Panc1 (cell line): ENCODE measurements at regions of chr11 and their contacts with region 1.

Region 1: GRCh38 chr11:82867495-82868082 is 32.6 kb downstream of the PRCP start:
- DNase-seq: peak; percentile 52
- ATAC-seq: peak; percentile 69
- H3K4me3 ChIP-seq: peak overlapping the region in 1 of 2 experiments; percentile 26; a peak in 2 of 4 replicates
- H3K27ac ChIP-seq: peak overlapping the region; percentile 60; the same call in 1 of the 2 replicates
- H3K4me1 ChIP-seq: peaks cover 21% of the 10 kb centered on the region
- H3K27me3 ChIP-seq: no peaks in the 10 kb centered on the region
- CTCF ChIP-seq: peak; percentile 90

Region 2: GRCh38 chr11:82718307-82718706 is 149.3 kb before region 1 on chr11:
- CTCF ChIA-PET with region 1: interaction called, 3 read pairs
- POLR2A ChIA-PET with region 1: no interaction called
- in situ Hi-C with region 1: no loop called
- intact Hi-C with region 1: loop called (anchors 1 kb)
- DNase-seq: peak; percentile 25
- ATAC-seq: peak; percentile 83
- H3K4me3 ChIP-seq: no peak overlapping the region
- H3K27ac ChIP-seq: no peak overlapping the region
- H3K4me1 ChIP-seq: no peaks in the 10 kb centered on the region; the same call in 1 of the 2 replicates
- H3K27me3 ChIP-seq: peaks cover 7% of the 10 kb centered on the region
- CTCF ChIP-seq: peak; percentile 91

Region 3: DNA sequence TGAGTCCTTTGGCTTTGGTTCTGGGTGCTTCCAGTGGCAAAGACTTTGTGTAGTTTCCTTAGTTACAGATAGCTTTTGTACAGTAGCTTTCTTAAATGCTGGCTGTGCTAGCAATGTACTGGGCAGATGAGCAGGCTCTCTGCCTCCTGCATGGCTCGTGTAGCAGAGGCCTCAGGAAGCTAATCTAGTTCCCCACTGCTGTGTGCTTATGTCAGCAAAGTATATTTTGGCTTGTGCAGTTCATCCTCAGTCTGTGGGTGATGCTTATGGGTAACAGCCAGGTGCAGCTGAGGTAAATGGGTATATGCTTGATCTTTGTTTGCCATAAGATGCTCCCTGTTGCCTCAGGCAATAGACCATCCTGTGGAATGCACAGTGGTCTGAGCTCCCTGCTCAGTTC is 64.9 kb before region 1 on chr11:
- CTCF ChIA-PET with region 1: no interaction called
- POLR2A ChIA-PET with region 1: no interaction called
- in situ Hi-C with region 1: no loop called
- intact Hi-C with region 1: no loop called
- DNase-seq: no peak
- ATAC-seq: no peak
- H3K4me3 ChIP-seq: no peak overlapping the region
- H3K27ac ChIP-seq: no peak overlapping the region
- H3K4me1 ChIP-seq: no peaks in the 10 kb centered on the region
- H3K27me3 ChIP-seq: peaks cover 6% of the 10 kb centered on the region
- CTCF ChIP-seq: no peak

Region 4: GRCh38 chr11:82818409-82819043 is 49.1 kb before region 1 on chr11:
- CTCF ChIA-PET with region 1: no interaction called
- POLR2A ChIA-PET with region 1: no interaction called
- in situ Hi-C with region 1: no loop called
- intact Hi-C with region 1: no loop called
- DNase-seq: no peak
- ATAC-seq: no peak
- H3K4me3 ChIP-seq: no peak overlapping the region
- H3K27ac ChIP-seq: no peak overlapping the region
- H3K4me1 ChIP-seq: no peaks in the 10 kb centered on the region
- H3K27me3 ChIP-seq: peaks cover 9% of the 10 kb centered on the region; the same call in 1 of the 2 replicates
- CTCF ChIP-seq: peak; percentile 33

Region 5: DNA sequence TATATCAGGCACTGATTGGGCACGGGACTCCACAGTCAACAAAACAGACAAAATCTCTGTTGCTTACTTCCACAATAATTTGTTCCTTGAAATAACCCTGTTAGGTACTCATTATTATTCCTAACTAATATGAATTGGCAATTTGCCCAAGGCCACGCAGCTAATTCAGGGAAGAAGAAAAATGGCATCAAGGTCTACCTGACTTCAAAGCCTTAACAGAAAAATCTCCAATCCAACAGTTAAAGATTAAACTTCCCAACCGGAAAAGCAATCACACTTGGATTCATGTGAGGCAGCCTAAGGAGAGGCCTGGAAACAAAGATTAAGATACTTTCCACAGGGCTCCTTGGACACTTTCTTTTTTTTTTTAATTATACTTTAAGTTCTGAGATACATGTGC is 36.2 kb before region 1 on chr11:
- CTCF ChIA-PET with region 1: no interaction called
- POLR2A ChIA-PET with region 1: interaction called, 11 read pairs
- in situ Hi-C with region 1: no loop called
- intact Hi-C with region 1: no loop called
- DNase-seq: no peak
- ATAC-seq: no peak
- H3K4me3 ChIP-seq: no peak overlapping the region
- H3K27ac ChIP-seq: no peak overlapping the region
- H3K4me1 ChIP-seq: no peaks in the 10 kb centered on the region; the same call in 1 of the 2 replicates
- H3K27me3 ChIP-seq: no peaks in the 10 kb centered on the region
- CTCF ChIP-seq: no peak

Region 6: GRCh38 chr11:82900277-82901164 is 32.9 kb after region 1 on chr11 and contains the start of gene PRCP:
- CTCF ChIA-PET with region 1: interaction called, 10 read pairs
- POLR2A ChIA-PET with region 1: no interaction called
- in situ Hi-C with region 1: no loop called
- intact Hi-C with region 1: no loop called
- DNase-seq: peak; percentile 79
- ATAC-seq: peak; percentile 94
- H3K4me3 ChIP-seq: peak within 1 kb of the TSS; percentile 75 to 91
- H3K27ac ChIP-seq: peak within 1 kb of the TSS; percentile 93
- H3K4me1 ChIP-seq: peaks cover 20% of the 10 kb centered on the region
- H3K27me3 ChIP-seq: no peaks in the 10 kb centered on the region
- CTCF ChIP-seq: no peak
- total RNA-seq, gene PRCP: 57.0 TPM

Region 7: DNA sequence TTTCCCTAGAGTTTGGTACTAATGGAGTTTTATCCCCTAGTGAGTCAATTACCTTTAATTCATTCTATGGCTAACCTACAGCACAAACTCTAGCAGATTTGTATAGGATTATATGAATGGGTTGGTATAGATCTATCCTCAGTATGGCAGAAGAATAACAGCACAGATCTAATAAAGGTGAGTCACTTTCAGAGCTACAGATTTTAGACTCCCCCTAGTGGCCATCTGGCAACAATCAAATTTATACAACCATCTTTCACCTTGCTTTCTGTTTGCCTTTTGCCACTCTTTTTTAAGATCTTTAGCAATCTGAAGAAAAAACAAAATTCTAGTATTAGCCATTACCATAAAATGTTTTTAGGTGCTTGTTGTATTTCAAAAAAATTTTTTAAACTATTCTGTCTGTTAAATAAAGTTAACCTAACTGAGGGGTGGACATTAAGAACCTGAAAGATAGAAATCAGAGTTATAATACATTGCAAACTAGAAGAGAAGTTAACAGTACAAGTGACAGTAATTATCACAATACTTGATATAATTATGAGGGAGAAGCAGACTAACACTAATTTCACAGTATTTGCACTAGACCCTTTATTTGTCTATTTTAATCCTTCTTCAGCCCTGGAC is 59.8 kb after region 1 on chr11:
- CTCF ChIA-PET with region 1: interaction called, 5 read pairs
- POLR2A ChIA-PET with region 1: no interaction called
- in situ Hi-C with region 1: no loop called
- intact Hi-C with region 1: loop called (anchors 1 kb)
- DNase-seq: peak; percentile 43
- ATAC-seq: peak; percentile 93
- H3K4me3 ChIP-seq: no peak overlapping the region
- H3K27ac ChIP-seq: no peak overlapping the region
- H3K4me1 ChIP-seq: no peaks in the 10 kb centered on the region
- H3K27me3 ChIP-seq: no peaks in the 10 kb centered on the region
- CTCF ChIP-seq: peak; percentile 87; the same call in 1 of the 2 replicates

Region 8: DNA sequence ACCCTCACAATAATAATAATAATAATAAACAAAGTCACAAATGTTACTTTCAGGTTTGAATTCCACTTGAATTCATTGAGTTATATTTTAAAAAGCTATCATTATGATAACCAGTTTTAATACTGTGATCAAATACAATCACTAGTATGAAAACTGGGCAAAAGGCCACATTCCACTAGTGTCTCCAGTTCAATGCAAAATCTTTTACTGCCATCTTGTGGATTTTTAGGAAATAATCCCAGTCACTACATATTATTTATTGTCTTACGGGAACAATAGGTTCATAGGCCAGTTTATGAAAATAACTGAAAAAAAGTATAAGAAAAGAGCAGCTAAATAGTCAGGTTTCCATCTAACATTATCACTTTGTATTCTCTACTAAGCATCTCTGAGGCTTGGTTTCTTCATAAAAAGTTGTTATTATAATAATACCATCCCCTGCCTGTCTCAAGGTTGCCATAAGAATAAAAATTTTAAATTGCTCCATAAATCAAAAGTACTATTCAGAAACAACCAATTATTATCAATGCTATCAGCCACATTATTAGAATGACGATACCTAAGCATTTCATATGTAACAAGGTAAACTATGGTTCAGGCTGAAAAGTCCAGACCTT is 952.5 kb after region 1 on chr11:
- CTCF ChIA-PET with region 1: no interaction called
- POLR2A ChIA-PET with region 1: no interaction called
- in situ Hi-C with region 1: no loop called
- intact Hi-C with region 1: loop called (anchors 5 kb)
- DNase-seq: peak; percentile 24
- ATAC-seq: peak; percentile 68
- H3K4me3 ChIP-seq: no peak overlapping the region
- H3K27ac ChIP-seq: no peak overlapping the region
- H3K4me1 ChIP-seq: no peaks in the 10 kb centered on the region
- H3K27me3 ChIP-seq: peaks cover 18% of the 10 kb centered on the region; the same call in 1 of the 2 replicates
- CTCF ChIP-seq: peak; percentile 73; the same call in 1 of the 2 replicates